ENCODE measurements at regions of chr12 and their contacts with region 1.

Region 1: DNA sequence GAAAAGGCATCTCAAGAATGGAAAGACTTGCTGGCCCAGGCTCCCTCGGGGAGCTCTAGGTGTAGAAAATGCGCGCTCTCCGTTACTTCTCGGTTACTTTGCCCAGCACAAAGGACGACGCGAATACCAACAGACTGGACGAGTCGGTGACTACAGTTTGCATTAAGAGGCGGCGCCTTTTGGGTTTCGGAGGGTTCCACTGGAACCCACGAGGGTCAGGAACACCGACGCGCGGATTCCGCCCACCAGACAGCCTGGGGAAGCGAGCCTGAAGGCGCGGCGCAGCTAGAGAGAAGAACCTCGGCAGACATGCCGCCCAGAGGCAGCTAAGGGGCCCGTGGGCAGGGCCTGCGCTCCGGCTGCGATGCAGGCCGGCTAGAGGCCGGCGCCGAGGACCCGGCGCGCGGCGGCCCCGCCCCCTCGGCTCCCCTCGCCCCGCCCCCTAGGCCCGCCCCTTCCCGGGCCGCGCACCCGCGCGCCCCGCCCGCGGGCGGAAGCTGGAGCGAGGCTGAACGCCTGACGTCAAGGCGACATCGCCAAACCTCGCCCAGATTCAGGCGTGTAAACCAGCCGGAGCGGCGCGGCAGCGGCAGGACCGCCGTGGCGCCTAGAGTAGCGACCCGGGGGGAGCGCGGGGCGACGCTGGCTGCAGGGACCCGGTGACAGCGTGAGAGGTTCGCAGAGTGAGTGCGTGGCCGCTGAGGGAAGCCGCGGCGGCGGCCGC is at the start of gene RAP1B:
- DNase-seq: peak; percentile 78 to 96 (median 88)
- ATAC-seq: peak; percentile 74
- H3K4me3 ChIP-seq: peak within 1 kb of the TSS; percentile 98
- H3K4me3 Mint-ChIP-seq: peak within 1 kb of the TSS; percentile 95
- H3K27ac ChIP-seq: peak within 1 kb of the TSS; percentile 93 to 96
- H3K27ac Mint-ChIP-seq: peak within 1 kb of the TSS; percentile 94
- H3K4me1 ChIP-seq: peaks cover 19% of the 10 kb centered on the region
- H3K4me1 Mint-ChIP-seq: peaks cover 43% of the 10 kb centered on the region
- H3K27me3 ChIP-seq: no peaks in the 10 kb centered on the region
- H3K27me3 Mint-ChIP-seq: no peaks in the 10 kb centered on the region
- CTCF ChIP-seq: no peak
- total RNA-seq, gene RAP1B: 256 to 261 TPM

Region 2: GRCh38 chr12:68364893-68365725 is 245.4 kb before region 1 on chr12:
- CTCF ChIA-PET with region 1: no interaction called
- POLR2A ChIA-PET with region 1: interaction called, 48 read pairs
- intact Hi-C with region 1: loop called in 1 of 2 experiments (anchors 2 kb)
- DNase-seq: peak; percentile 46 to 95 (median 74)
- ATAC-seq: peak; percentile 90
- H3K4me3 ChIP-seq: peak overlapping the region; percentile 49
- H3K4me3 Mint-ChIP-seq: peak overlapping the region; percentile 88
- H3K27ac ChIP-seq: peak overlapping the region; percentile 64 to 79
- H3K27ac Mint-ChIP-seq: peak overlapping the region; percentile 93
- H3K4me1 ChIP-seq: peaks cover 52% of the 10 kb centered on the region
- H3K4me1 Mint-ChIP-seq: peaks cover 75% of the 10 kb centered on the region
- H3K27me3 ChIP-seq: no peaks in the 10 kb centered on the region
- H3K27me3 Mint-ChIP-seq: no peaks in the 10 kb centered on the region
- CTCF ChIP-seq: no peak

Region 3: GRCh38 chr12:68538726-68539614 is 71.6 kb before region 1 on chr12:
- CTCF ChIA-PET with region 1: no interaction called
- POLR2A ChIA-PET with region 1: interaction called, 81 read pairs
- intact Hi-C with region 1: loop called (anchors 2 to 5 kb)
- DNase-seq: peak; percentile 20 to 91 (median 42)
- ATAC-seq: peak; percentile 94
- H3K4me3 ChIP-seq: peak overlapping the region; percentile 5
- H3K4me3 Mint-ChIP-seq: peak overlapping the region; percentile 49
- H3K27ac ChIP-seq: no peak overlapping the region
- H3K27ac Mint-ChIP-seq: peak overlapping the region; percentile 80
- H3K4me1 ChIP-seq: peaks cover 16% of the 10 kb centered on the region
- H3K4me1 Mint-ChIP-seq: peaks cover 65% of the 10 kb centered on the region
- H3K27me3 ChIP-seq: no peaks in the 10 kb centered on the region
- H3K27me3 Mint-ChIP-seq: no peaks in the 10 kb centered on the region
- CTCF ChIP-seq: no peak

Region 4: GRCh38 chr12:68595241-68595640 is 15.3 kb before region 1 on chr12:
- CTCF ChIA-PET with region 1: no interaction called
- POLR2A ChIA-PET with region 1: interaction called, 119 read pairs
- intact Hi-C with region 1: loop called in 1 of 2 experiments (anchors 2 kb)
- DNase-seq: no peak
- ATAC-seq: no peak
- H3K4me3 ChIP-seq: no peak overlapping the region
- H3K4me3 Mint-ChIP-seq: peak overlapping the region; percentile 22
- H3K27ac ChIP-seq: no peak overlapping the region
- H3K27ac Mint-ChIP-seq: peak overlapping the region; percentile 37
- H3K4me1 ChIP-seq: peaks cover 54% of the 10 kb centered on the region
- H3K4me1 Mint-ChIP-seq: peaks cover 77% of the 10 kb centered on the region
- H3K27me3 ChIP-seq: no peaks in the 10 kb centered on the region
- H3K27me3 Mint-ChIP-seq: no peaks in the 10 kb centered on the region
- CTCF ChIP-seq: no peak

Region 5: GRCh38 chr12:68641138-68641537 is 30.6 kb after region 1 on chr12:
- CTCF ChIA-PET with region 1: no interaction called
- POLR2A ChIA-PET with region 1: interaction called, 9 read pairs
- intact Hi-C with region 1: loop called (anchors 2 to 5 kb)
- DNase-seq: peak in 5 of 14 experiments; percentile 17 to 54 (median 42)
- ATAC-seq: peak; percentile 55
- H3K4me3 ChIP-seq: peak overlapping the region; percentile 17
- H3K4me3 Mint-ChIP-seq: peak overlapping the region; percentile 76
- H3K27ac ChIP-seq: peak overlapping the region in 1 of 2 donors; percentile 35
- H3K27ac Mint-ChIP-seq: peak overlapping the region; percentile 52
- H3K4me1 ChIP-seq: peaks cover 46% of the 10 kb centered on the region
- H3K4me1 Mint-ChIP-seq: peaks cover 93% of the 10 kb centered on the region
- H3K27me3 ChIP-seq: no peaks in the 10 kb centered on the region
- H3K27me3 Mint-ChIP-seq: no peaks in the 10 kb centered on the region
- CTCF ChIP-seq: no peak

Region 6: GRCh38 chr12:68686595-68687521 is 76.3 kb after region 1 on chr12 and contains the start of gene NUP107:
- CTCF ChIA-PET with region 1: no interaction called
- POLR2A ChIA-PET with region 1: interaction called, 14 read pairs
- intact Hi-C with region 1: no loop called
- DNase-seq: peak; percentile 94 to 99 (median 97)
- ATAC-seq: peak; percentile 94
- H3K4me3 ChIP-seq: peak within 1 kb of the TSS; percentile 82
- H3K4me3 Mint-ChIP-seq: peak within 1 kb of the TSS; percentile 100
- H3K27ac ChIP-seq: peak within 1 kb of the TSS; percentile 58 to 65
- H3K27ac Mint-ChIP-seq: peak within 1 kb of the TSS; percentile 98
- H3K4me1 ChIP-seq: peaks cover 11% of the 10 kb centered on the region
- H3K4me1 Mint-ChIP-seq: peaks cover 47% of the 10 kb centered on the region
- H3K27me3 ChIP-seq: no peaks in the 10 kb centered on the region
- H3K27me3 Mint-ChIP-seq: no peaks in the 10 kb centered on the region
- CTCF ChIP-seq: no peak
- total RNA-seq, gene NUP107: 37.2 to 38.7 TPM

Region 7: DNA sequence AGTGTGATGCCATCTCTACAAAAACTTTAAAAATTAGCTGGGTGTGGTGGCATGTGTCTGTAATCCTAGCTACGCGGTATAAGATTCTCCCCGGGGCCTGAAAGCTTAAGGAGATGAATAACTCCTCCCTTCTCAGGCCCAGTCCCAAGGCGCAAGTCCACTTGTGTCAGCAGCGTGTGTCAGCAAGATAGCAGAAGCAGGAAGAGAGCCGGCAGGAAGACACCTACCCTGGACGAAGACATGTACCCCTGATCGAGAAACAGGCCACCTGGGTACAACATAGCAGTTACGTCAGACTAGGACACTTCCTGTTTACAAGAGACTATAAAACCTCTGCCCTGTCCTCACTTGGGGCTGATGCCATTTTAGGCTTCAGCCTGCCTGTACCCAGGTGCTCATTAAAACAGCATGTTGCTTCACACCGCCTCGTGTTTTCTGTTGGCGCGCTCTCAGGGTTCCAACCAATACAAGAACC is 279.2 kb after region 1 on chr12:
- CTCF ChIA-PET with region 1: no interaction called
- POLR2A ChIA-PET with region 1: no interaction called
- intact Hi-C with region 1: no loop called
- DNase-seq: peak in 2 of 14 experiments; percentile 4 to 9
- ATAC-seq: no peak
- H3K4me3 ChIP-seq: no peak overlapping the region
- H3K4me3 Mint-ChIP-seq: no peak overlapping the region
- H3K27ac ChIP-seq: no peak overlapping the region
- H3K27ac Mint-ChIP-seq: no peak overlapping the region
- H3K4me1 ChIP-seq: peaks cover 10% of the 10 kb centered on the region
- H3K4me1 Mint-ChIP-seq: peaks cover 16% of the 10 kb centered on the region
- H3K27me3 ChIP-seq: no peaks in the 10 kb centered on the region
- H3K27me3 Mint-ChIP-seq: no peaks in the 10 kb centered on the region
- CTCF ChIP-seq: no peak

Region 8: DNA sequence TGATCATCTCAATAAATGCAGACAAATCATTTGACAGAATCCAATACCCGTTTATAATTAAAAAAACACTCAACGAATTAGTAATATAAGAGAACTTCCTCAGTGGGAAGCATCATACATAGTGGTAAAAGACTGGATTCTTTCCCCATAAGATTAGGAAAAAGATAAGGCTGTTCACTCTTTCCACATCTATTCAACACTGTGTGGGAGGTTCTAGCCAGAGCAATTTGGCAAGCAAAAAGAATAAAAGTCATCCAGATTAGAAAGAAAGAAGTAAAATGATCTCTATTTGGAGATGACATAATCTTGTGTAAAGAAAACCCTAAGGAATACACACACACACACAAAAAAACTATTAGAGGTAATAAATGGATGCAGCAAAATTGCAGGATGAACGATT is 787.4 kb after region 1 on chr12:
- CTCF ChIA-PET with region 1: no interaction called
- POLR2A ChIA-PET with region 1: no interaction called
- intact Hi-C with region 1: no loop called
- DNase-seq: no peak
- ATAC-seq: no peak
- H3K4me3 ChIP-seq: no peak overlapping the region
- H3K4me3 Mint-ChIP-seq: no peak overlapping the region
- H3K27ac ChIP-seq: no peak overlapping the region
- H3K27ac Mint-ChIP-seq: no peak overlapping the region
- H3K4me1 ChIP-seq: no peaks in the 10 kb centered on the region
- H3K4me1 Mint-ChIP-seq: no peaks in the 10 kb centered on the region
- H3K27me3 ChIP-seq: no peaks in the 10 kb centered on the region
- H3K27me3 Mint-ChIP-seq: no peaks in the 10 kb centered on the region
- CTCF ChIP-seq: no peak

Measured in CD4-positive, alpha-beta T cell (primary cell).